Activated CD8-positive, alpha-beta T cell treated with anti-CD3 and anti-CD28 coated beads for 36 hours (primary cell): ENCODE measurements at regions of chr22 and their contacts with region 1.

Region 1: GRCh38 chr22:40898850-40899357 is 37.0 kb upstream of the DNAJB7 start:
- DNase-seq: peak; percentile 19
- ATAC-seq: peak; percentile 91
- H3K4me3 Mint-ChIP-seq: peak overlapping the region; percentile 43
- H3K27ac Mint-ChIP-seq: peak overlapping the region; percentile 80
- H3K4me1 Mint-ChIP-seq: peaks cover 10% of the 10 kb centered on the region
- H3K27me3 Mint-ChIP-seq: no peaks in the 10 kb centered on the region
- CTCF ChIP-seq: peak; percentile 75

Region 2: GRCh38 chr22:40791241-40791640 is 107.7 kb before region 1 on chr22:
- CTCF ChIA-PET with region 1: no interaction called
- POLR2A ChIA-PET with region 1: no interaction called
- intact Hi-C with region 1: no loop called
- DNase-seq: no peak
- ATAC-seq: no peak
- H3K4me3 Mint-ChIP-seq: no peak overlapping the region
- H3K27ac Mint-ChIP-seq: no peak overlapping the region
- H3K4me1 Mint-ChIP-seq: peaks cover 20% of the 10 kb centered on the region
- H3K27me3 Mint-ChIP-seq: no peaks in the 10 kb centered on the region
- CTCF ChIP-seq: no peak

Region 3: DNA sequence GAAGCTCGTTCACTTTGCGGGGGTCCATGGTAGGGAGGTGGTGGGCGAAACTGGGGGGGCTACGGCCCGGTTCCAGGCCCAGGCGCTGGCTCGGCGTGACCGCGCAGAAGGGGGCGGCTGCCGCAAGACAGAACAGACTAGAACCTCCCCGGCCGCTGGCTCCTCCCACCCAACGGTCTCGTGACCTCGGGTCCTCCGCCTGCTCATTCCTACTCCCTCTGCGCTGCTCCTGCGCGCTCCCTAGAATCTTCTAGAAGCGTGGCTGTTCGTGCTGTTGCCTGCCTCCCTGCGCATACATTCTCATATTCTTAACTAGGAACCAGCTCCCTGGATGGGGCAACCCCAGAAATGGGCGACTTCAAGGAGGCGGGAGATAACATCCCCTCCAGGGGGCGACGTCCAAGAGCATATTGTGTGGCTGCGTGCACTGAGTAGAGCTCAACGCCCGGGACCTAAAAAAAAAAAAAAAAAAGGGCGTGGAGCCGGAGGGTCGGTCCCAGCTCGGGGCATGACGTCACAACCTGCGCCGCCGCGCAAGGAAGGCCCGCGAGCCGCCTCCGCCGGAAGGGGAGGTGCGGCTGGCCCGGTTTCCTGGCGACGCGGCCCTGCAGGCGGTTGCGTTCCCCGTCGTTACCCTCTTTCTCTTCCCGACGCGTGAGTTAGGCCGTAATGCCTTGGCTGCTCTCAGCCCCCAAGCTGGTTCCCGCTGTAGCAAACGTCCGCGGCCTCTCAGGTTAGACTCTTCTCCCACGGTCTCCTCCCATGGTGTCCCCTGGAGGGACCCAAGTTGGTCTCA is 42.2 kb before region 1 on chr22 and contains the starts of genes ST13 and XPNPEP3:
- CTCF ChIA-PET with region 1: interaction called, 10 read pairs
- POLR2A ChIA-PET with region 1: interaction called, 5 read pairs
- intact Hi-C with region 1: no loop called
- DNase-seq: peak; percentile 98
- ATAC-seq: peak; percentile 93
- H3K4me3 Mint-ChIP-seq: peak within 1 kb of the TSS; percentile 94
- H3K27ac Mint-ChIP-seq: peak within 1 kb of the TSS; percentile 100
- H3K4me1 Mint-ChIP-seq: peaks cover 49% of the 10 kb centered on the region
- H3K27me3 Mint-ChIP-seq: no peaks in the 10 kb centered on the region
- CTCF ChIP-seq: peak; percentile 16
- total RNA-seq, gene ST13: 237 to 249 TPM
- total RNA-seq, gene XPNPEP3: 24.4 to 25.5 TPM